ENCODE measurements at regions of chr4 and their contacts with region 1.

Region 1: DNA sequence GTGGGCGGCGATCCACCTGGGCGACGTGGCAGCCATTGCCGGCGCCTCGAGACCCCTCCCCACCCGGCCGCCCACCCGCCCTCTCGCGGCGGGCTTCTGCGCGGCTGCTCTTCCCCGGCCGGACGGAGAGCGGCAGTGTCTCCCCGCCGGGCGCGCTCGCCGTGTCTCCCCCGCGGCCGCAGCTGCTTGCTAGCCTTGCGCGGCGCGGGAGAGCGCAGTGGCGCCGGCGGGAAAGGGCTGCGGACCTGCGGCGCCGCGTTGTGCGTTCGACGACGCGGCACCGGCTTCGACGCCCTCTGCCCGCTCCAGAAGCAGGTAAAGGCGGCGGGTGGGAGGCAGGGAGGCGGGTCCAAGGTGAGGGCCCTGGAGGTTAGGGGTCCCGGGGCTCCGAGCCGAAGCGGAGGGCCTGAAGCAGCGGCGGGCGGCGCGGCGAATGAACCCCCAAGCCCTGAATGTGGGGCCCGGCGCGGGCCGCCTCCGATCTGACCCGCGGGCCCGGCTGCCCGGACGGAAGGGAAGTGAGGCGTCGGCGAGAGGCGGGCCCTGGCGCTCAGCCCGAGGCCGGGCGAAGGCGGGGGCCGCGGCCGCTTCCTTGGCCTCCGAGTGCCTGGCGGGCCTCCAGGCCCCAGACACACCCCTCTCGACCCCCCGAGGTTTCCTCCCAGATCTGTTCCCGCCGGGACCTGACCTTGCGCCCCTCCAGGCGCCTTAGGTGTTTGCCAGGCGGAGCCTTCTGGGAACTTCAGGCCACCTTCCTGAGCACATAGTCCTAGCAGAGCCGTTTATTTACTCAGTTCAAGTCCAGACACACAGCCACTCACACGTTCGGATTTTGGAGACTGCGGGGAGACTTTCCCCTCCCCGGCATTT is at the start of gene N4BP2:
- DNase-seq: peak; percentile 88
- ATAC-seq: peak; percentile 61
- H3K4me3 Mint-ChIP-seq: peak within 1 kb of the TSS; percentile 92
- H3K27ac Mint-ChIP-seq: peak within 1 kb of the TSS; percentile 100
- H3K4me1 Mint-ChIP-seq: peaks cover 30% of the 10 kb centered on the region
- H3K27me3 Mint-ChIP-seq: no peaks in the 10 kb centered on the region
- total RNA-seq, gene N4BP2: 16.2 to 23.2 TPM

Region 2: GRCh38 chr4:39181905-39182638 is 874.9 kb before region 1 on chr4 and contains the start of gene WDR19:
- CTCF ChIA-PET with region 1: no interaction called
- POLR2A ChIA-PET with region 1: no interaction called
- intact Hi-C with region 1: loop called in 1 of 2 experiments (anchors 2 kb)
- DNase-seq: peak; percentile 99
- ATAC-seq: peak; percentile 99
- H3K4me3 Mint-ChIP-seq: no peak within 1 kb of the TSS
- H3K27ac Mint-ChIP-seq: no peak within 1 kb of the TSS
- H3K4me1 Mint-ChIP-seq: peaks cover 8% of the 10 kb centered on the region
- H3K27me3 Mint-ChIP-seq: peaks cover 3% of the 10 kb centered on the region
- total RNA-seq, gene WDR19: 12.1 to 16.2 TPM

Region 3: GRCh38 chr4:39697740-39698423 is 359.1 kb before region 1 on chr4 and contains the start of gene UBE2K:
- CTCF ChIA-PET with region 1: no interaction called
- POLR2A ChIA-PET with region 1: no interaction called
- intact Hi-C with region 1: loop called (anchors 1 to 2 kb)
- DNase-seq: peak; percentile 93
- ATAC-seq: peak; percentile 87
- H3K4me3 Mint-ChIP-seq: peak within 1 kb of the TSS; percentile 99
- H3K27ac Mint-ChIP-seq: peak within 1 kb of the TSS; percentile 99
- H3K4me1 Mint-ChIP-seq: peaks cover 28% of the 10 kb centered on the region
- H3K27me3 Mint-ChIP-seq: no peaks in the 10 kb centered on the region
- total RNA-seq, gene UBE2K: 87.2 to 122 TPM

Region 4: GRCh38 chr4:40149960-40150385 is 93.0 kb after region 1 on chr4:
- CTCF ChIA-PET with region 1: interaction called, 3 read pairs
- POLR2A ChIA-PET with region 1: no interaction called
- intact Hi-C with region 1: loop called (anchors 2 to 5 kb)
- DNase-seq: peak; percentile 80
- ATAC-seq: peak; percentile 96
- H3K4me3 Mint-ChIP-seq: no peak overlapping the region
- H3K27ac Mint-ChIP-seq: peak overlapping the region; percentile 61
- H3K4me1 Mint-ChIP-seq: peaks cover 33% of the 10 kb centered on the region
- H3K27me3 Mint-ChIP-seq: no peaks in the 10 kb centered on the region

Region 5: DNA sequence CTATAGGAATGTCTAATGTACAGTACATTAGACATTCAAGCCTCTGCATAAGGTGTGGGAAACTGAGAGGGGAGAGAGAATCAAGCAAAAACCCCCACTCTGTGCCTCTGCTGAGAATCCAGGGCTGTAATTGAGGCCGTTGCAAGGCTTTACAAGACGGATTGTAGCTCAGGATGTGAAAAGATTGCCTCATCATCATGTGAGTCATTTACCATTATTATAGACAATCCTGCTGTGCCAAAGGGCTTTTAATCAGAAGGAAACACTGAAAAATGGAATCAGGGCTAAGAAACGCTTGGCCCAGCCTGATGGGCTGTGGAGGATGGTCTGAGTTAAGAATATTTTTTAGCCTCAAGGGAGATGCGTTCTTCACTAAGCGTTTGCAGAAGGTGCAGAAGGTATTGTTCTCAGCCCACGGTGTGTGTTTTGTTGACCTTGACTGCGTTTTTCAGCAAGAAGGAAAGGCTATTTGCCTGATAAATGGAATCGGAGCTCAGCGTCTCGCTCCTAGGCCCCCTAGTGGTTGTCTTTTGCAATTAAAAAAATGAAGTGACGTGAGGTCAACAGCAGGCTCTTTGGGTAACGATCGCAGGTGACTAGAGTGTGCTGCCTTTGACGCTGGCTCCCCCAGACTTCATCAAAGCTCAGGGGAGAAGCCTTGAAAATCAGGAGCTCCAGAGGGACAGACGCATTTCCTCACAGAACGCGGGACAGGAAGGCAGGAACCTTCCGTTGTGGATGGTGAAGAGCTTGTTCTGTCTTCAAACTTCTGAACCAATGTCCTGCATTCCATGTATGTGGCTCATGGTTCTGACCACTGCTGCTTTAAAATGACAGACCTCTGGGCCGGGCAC is 260.1 kb after region 1 on chr4:
- CTCF ChIA-PET with region 1: interaction called, 16 read pairs
- POLR2A ChIA-PET with region 1: interaction called, 10 read pairs
- intact Hi-C with region 1: loop called in 1 of 2 experiments (anchors 1 kb)
- DNase-seq: peak; percentile 73
- ATAC-seq: peak; percentile 80
- H3K4me3 Mint-ChIP-seq: peak overlapping the region; percentile 77
- H3K27ac Mint-ChIP-seq: peak overlapping the region; percentile 100
- H3K4me1 Mint-ChIP-seq: peaks cover 58% of the 10 kb centered on the region
- H3K27me3 Mint-ChIP-seq: no peaks in the 10 kb centered on the region

Region 6: GRCh38 chr4:40719008-40719623 is 662.2 kb after region 1 on chr4:
- CTCF ChIA-PET with region 1: no interaction called
- POLR2A ChIA-PET with region 1: no interaction called
- intact Hi-C with region 1: loop called in 1 of 2 experiments (anchors 5 kb)
- DNase-seq: peak; percentile 17
- ATAC-seq: peak; percentile 66
- H3K4me3 Mint-ChIP-seq: no peak overlapping the region
- H3K27ac Mint-ChIP-seq: peak overlapping the region; percentile 40
- H3K4me1 Mint-ChIP-seq: peaks cover 15% of the 10 kb centered on the region
- H3K27me3 Mint-ChIP-seq: no peaks in the 10 kb centered on the region

Measured in activated CD4-positive, alpha-beta T cell treated with anti-CD3 and anti-CD28 coated beads for 36 hours (primary cell).